T-cell (primary cell): ENCODE measurements at regions of chr1 and their contacts with region 1.

Region 1: DNA sequence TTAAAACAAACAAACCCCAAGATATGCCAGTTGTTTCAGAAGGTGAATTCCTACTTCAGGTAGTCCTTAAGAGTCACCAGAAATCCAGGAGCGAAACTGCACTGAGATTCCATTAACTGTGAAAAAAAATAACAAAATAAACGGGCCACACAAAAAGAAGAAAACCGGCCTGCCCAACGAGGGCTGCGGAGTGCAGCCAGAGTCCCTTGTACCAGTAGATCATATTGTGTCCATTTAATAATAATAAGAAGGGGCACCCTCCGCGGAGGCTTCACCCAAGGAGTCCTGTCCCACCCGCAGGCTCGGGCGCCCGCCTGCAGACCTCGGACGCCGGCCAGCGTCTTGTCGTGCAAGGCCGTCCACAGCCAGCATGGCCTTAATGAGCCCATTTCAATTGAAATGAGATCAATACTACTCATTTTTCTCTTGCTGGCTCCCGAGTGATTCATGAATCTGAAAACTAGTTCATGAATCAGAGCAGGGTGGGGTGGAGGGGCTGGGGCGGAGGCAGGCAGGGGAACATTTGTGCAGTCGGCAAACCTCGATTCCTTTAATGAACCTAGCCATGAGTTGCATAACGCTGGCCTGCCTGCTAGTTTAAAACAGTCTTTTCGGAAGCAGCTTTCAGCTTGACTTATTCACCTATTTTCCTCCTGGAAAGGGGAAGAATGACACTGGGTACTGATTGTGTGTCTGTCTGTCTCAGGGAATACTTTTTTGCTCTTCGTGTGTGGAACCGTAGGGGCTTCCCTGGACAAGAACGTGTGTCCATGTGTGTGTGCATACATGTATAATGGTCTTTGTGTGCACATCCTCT is 113.1 kb upstream of the IRF2BP2 start:
- DNase-seq: peak in 30 of 35 experiments; percentile 11 to 67 (median 32)
- ATAC-seq: peak; percentile 0 to 40 (median 36)
- H3K4me3 ChIP-seq: peak overlapping the region; percentile 7 to 23
- H3K4me3 Mint-ChIP-seq: peak overlapping the region; percentile 67 to 76 (median 68)
- H3K27ac ChIP-seq: peak overlapping the region; percentile 98
- H3K27ac Mint-ChIP-seq: peak overlapping the region; percentile 92 to 97
- H3K4me1 ChIP-seq: peaks cover 24 to 54% of the 10 kb centered on the region in 2 experiments
- H3K4me1 Mint-ChIP-seq: peaks cover 68 to 81% (median 70%) of the 10 kb centered on the region in 3 donors
- H3K27me3 ChIP-seq: no peaks in the 10 kb centered on the region
- H3K27me3 Mint-ChIP-seq: no peaks in the 10 kb centered on the region

Region 2: DNA sequence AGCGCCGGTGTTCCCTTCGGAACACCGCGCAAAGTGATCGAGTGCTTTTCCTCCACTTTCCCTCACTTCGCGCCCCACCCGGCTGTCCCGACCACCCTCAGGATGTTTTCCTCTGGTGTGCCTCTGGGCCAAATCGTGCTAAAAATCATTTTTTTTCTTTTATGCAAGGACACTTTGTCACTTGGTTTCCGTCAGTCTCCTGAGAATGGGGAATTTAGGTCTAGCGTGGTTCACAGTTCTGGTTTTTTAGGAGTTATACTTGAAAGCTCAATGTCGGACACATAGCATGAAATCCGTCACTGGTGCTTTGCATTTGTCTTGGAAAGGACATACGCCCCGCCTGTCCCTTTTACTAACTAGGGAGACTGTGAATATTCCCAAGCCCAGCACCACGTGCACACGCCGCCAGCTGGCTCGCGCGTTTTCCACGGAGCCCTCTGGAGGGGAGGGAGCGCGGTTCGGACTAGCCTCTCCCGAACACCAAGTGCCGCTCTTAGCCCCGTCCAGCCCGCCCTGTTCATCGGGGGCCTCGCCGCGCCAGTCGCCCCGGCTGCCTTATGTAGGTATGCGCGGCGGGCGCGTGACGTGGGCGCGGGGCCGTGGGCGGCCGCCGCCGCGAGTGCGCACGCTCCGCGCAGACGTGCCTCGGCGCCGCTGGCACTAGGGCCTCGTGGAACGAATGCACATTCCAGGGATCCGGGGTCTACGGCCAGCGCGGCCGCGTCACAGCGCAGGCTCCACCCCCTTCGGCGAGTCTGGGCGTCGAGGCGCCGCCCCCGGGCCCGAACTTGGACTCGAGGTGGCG is 112.6 kb before region 1 on chr1:
- CTCF ChIA-PET with region 1: interaction called, 4 to 27 read pairs
- POLR2A ChIA-PET with region 1: interaction called, 39 to 150 read pairs
- DNase-seq: peak; percentile 76 to 96 (median 88)
- ATAC-seq: peak; percentile 55 to 57 (median 56)
- H3K4me3 ChIP-seq: peak overlapping the region; percentile 82 to 84
- H3K4me3 Mint-ChIP-seq: peak overlapping the region; percentile 83 to 87 (median 84)
- H3K27ac ChIP-seq: peak overlapping the region; percentile 98
- H3K27ac Mint-ChIP-seq: peak overlapping the region; percentile 93 to 96
- H3K4me1 ChIP-seq: peaks cover 39 to 46% of the 10 kb centered on the region in 2 experiments
- H3K4me1 Mint-ChIP-seq: peaks cover 48 to 60% (median 51%) of the 10 kb centered on the region in 3 donors
- H3K27me3 ChIP-seq: no peaks in the 10 kb centered on the region
- H3K27me3 Mint-ChIP-seq: no peaks in the 10 kb centered on the region

Region 3: GRCh38 chr1:234665975-234666605 is 57.0 kb before region 1 on chr1:
- CTCF ChIA-PET with region 1: no interaction called
- POLR2A ChIA-PET with region 1: no interaction called
- DNase-seq: no peak
- ATAC-seq: no peak
- H3K4me3 ChIP-seq: no peak overlapping the region
- H3K4me3 Mint-ChIP-seq: no peak overlapping the region
- H3K27ac ChIP-seq: no peak overlapping the region
- H3K27ac Mint-ChIP-seq: no peak overlapping the region
- H3K4me1 ChIP-seq: no peaks in the 10 kb centered on the region
- H3K4me1 Mint-ChIP-seq: no peaks in the 10 kb centered on the region
- H3K27me3 ChIP-seq: no peaks in the 10 kb centered on the region
- H3K27me3 Mint-ChIP-seq: no peaks in the 10 kb centered on the region

Region 4: DNA sequence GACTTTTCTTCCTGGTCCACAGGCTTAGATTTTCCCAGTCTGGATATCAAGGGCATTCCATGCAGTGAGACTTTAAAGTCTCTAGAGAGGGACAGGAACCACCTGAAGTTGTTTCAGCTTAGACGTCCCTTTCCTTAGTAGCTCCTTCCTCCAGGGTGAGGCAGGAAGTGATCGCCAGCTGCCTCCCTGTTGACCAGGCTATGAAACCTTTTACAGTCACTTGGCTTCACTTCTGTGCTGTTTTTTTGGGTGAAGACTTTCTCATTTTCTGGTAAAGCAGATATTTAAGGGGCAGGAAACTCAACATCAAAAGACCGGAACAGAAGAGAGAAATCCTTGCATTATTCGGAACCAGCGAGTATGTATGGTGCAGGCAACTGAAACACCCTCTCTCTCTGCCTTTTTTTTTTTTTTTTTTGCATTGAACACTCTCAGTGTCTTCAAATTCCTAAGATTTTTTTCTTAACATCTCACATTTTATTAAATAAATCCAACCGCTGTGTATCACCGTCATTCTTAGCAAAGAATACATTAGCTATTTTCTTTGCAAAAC is 121.4 kb after region 1 on chr1:
- CTCF ChIA-PET with region 1: interaction called in 1 of 2 experiments, 10 read pairs
- POLR2A ChIA-PET with region 1: interaction called in 1 of 2 experiments, 42 read pairs
- DNase-seq: peak in 2 of 35 experiments; percentile 11 to 52
- ATAC-seq: peak; percentile 28 to 43 (median 40)
- H3K4me3 ChIP-seq: peak overlapping the region in 1 of 2 donors; percentile 27
- H3K4me3 Mint-ChIP-seq: peak overlapping the region; percentile 39 to 59 (median 49)
- H3K27ac ChIP-seq: peak overlapping the region; percentile 48
- H3K27ac Mint-ChIP-seq: peak overlapping the region; percentile 84 to 86
- H3K4me1 ChIP-seq: peaks cover 34 to 36% of the 10 kb centered on the region in 2 experiments
- H3K4me1 Mint-ChIP-seq: peaks cover 58 to 73% (median 64%) of the 10 kb centered on the region in 3 donors
- H3K27me3 ChIP-seq: no peaks in the 10 kb centered on the region
- H3K27me3 Mint-ChIP-seq: no peaks in the 10 kb centered on the region

Region 5: GRCh38 chr1:235181561-235182245 is 458.6 kb after region 1 on chr1:
- CTCF ChIA-PET with region 1: no interaction called
- POLR2A ChIA-PET with region 1: interaction called in 1 of 2 experiments, 15 read pairs
- DNase-seq: no peak
- ATAC-seq: peak in 1 of 4 experiments; percentile 46
- H3K4me3 ChIP-seq: no peak overlapping the region
- H3K4me3 Mint-ChIP-seq: peak overlapping the region in 1 of 3 donors; percentile 28
- H3K27ac ChIP-seq: no peak overlapping the region
- H3K27ac Mint-ChIP-seq: peak overlapping the region; percentile 19 to 84
- H3K4me1 ChIP-seq: peaks cover 0 to 2% of the 10 kb centered on the region in 2 experiments
- H3K4me1 Mint-ChIP-seq: peaks cover 17 to 19% (median 18%) of the 10 kb centered on the region in 3 donors
- H3K27me3 ChIP-seq: no peaks in the 10 kb centered on the region
- H3K27me3 Mint-ChIP-seq: no peaks in the 10 kb centered on the region